ENCODE measurements at regions of chr6 and their contacts with region 1.

Region 1: GRCh38 chr6:165850434-165851019 is 187.5 kb upstream of the PDE10A start:
- DNase-seq: peak; percentile 70 to 88 (median 82)
- H3K4me3 ChIP-seq: peak overlapping the region in 55 of 59 donors; percentile 0 to 59 (median 38)
- H3K27ac ChIP-seq: no peak overlapping the region
- H3K27me3 ChIP-seq: peaks cover 0 to 47% (median 15%) of the 10 kb centered on the region in 45 donors
- CTCF ChIP-seq: peak; percentile 91 to 100 (median 99)

Region 2: GRCh38 chr6:165439928-165440554 is 410.5 kb before region 1 on chr6:
- intact Hi-C with region 1: loop called (anchors 2 kb)
- DNase-seq: no peak
- H3K4me3 ChIP-seq: no peak overlapping the region
- H3K27ac ChIP-seq: no peak overlapping the region
- H3K27me3 ChIP-seq: no peaks in the 10 kb centered on the region
- CTCF ChIP-seq: peak; percentile 50 to 88 (median 70)

Region 3: DNA sequence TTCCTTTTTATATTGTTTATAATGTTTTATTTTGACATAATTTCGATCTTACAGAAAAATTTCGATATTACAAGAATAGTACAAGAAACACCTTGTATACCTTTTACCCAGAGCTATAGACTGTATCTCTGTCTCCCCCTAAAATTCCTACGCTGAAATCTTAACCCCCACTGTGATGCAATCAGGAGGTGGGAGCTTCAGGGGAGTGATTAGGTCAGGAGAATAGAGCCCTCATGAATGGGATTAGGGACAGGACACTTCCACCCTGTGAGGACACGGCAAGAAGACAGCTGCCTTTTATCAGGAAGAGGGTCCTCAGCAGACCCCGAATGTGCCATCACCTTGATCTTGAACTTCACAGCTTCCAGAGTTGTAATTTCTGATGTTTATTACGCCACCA is 392.4 kb before region 1 on chr6:
- intact Hi-C with region 1: no loop called
- DNase-seq: no peak
- H3K4me3 ChIP-seq: no peak overlapping the region
- H3K27ac ChIP-seq: no peak overlapping the region
- H3K27me3 ChIP-seq: no peaks in the 10 kb centered on the region
- CTCF ChIP-seq: no peak

Region 4: DNA sequence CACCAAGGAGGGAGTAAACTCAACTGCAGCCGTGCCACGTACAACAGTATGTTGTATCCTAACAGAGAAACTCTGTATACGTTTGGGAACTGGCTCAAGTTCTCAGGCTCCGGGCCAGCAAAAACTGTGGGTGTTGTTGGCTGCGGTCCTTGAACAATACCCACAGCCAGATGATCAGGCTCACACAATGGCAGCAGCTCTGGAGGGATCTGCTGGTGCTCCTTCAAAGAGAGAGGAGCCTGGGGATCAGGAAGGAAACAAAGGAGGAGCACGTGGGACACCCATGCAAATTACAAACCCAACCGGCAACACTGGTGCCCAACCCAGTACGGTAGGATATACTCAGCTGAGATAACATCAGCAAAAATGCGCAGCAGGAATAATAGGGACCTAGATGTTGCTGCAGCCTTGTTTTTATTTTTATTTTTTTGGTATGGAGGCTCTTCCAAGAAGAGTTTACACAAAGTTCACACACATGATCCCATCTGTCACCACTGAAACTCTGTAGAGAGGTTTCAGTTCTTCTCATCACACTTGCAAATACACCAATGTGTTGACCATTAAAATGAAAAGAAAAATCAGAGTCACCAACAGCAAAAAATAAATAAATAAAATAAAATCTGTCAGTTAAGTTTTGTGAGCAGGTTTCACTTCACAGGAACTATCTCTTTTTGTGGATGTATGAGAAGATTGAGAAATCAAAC is 146.3 kb before region 1 on chr6:
- intact Hi-C with region 1: loop called in 1 of 2 experiments (anchors 10 kb)
- DNase-seq: peak; percentile 32 to 88 (median 80)
- H3K4me3 ChIP-seq: peak overlapping the region in 20 of 59 donors; percentile 1 to 35 (median 14)
- H3K27ac ChIP-seq: peak overlapping the region in 1 of 59 donors; percentile 9
- H3K27me3 ChIP-seq: no peaks in the 10 kb centered on the region
- CTCF ChIP-seq: no peak

Region 5: GRCh38 chr6:165729307-165729936 is 121.1 kb before region 1 on chr6:
- intact Hi-C with region 1: loop called in 1 of 2 experiments (anchors 5 kb)
- DNase-seq: no peak
- H3K4me3 ChIP-seq: no peak overlapping the region
- H3K27ac ChIP-seq: no peak overlapping the region
- H3K27me3 ChIP-seq: peaks cover 0 to 3% (median 0%) of the 10 kb centered on the region in 45 donors
- CTCF ChIP-seq: peak; percentile 53 to 85 (median 74)

Measured in dorsolateral prefrontal cortex (tissue), 120 donors.